Endothelial cell of umbilical vein (primary cell): ENCODE measurements at regions of chr2 and their contacts with region 1.

Region 1: GRCh38 chr2:231191896-231192872 is 6.2 kb upstream of the ARMC9 start:
- DNase-seq: peak; percentile 77
- H3K4me3 ChIP-seq: no peak overlapping the region
- H3K27ac ChIP-seq: peak overlapping the region; percentile 47
- H3K4me1 ChIP-seq: peaks cover 24% of the 10 kb centered on the region
- H3K27me3 ChIP-seq: no peaks in the 10 kb centered on the region
- CTCF ChIP-seq: peak; percentile 79 to 88
- POLR2A ChIP-seq: no peak

Region 2: DNA sequence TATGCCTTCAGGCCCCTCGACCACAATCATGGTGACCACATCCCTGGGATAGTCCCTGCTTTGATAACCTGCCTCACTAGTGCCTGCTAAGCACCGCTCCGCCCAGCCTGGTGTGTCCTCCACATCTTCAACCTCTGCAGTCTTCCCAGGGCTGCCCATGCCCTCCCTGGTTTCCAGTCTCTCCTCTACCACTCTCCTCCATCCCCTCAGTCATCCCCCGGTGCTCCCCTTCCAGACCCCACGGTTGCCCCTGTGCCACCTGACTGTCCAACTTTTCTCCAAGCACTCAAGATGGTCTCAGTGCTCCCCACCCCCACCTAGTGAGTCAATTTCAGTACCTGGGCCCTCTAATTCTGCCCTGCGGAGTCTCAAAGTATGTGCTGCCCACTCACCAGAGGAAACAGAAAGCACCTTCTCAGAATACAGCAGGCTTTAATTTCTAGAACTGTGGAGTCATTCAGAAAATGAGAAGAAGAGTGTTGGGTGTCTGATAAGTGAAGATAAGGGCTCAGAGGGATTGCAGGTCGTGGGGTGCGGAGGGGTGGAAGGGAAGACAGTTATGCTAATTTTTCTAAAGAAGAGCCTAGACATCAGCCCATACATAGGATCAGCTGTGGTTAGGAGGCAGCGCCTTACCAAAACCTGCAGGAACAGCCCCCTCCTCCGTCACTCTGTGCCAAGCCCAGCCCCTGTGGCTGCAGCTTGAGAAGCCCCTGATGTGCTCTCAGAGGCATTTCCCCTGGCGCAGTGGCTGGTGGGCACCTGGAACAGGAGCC is 533.1 kb before region 1 on chr2:
- CTCF ChIA-PET with region 1: no interaction called
- POLR2A ChIA-PET with region 1: no interaction called
- dilution Hi-C with region 1: no loop called
- intact Hi-C with region 1: no loop called
- DNase-seq: no peak
- H3K4me3 ChIP-seq: no peak overlapping the region
- H3K27ac ChIP-seq: no peak overlapping the region
- H3K4me1 ChIP-seq: peaks cover 4% of the 10 kb centered on the region
- H3K27me3 ChIP-seq: no peaks in the 10 kb centered on the region
- CTCF ChIP-seq: no peak
- POLR2A ChIP-seq: no peak

Region 3: GRCh38 chr2:231124838-231125568 is 67.2 kb before region 1 on chr2 and contains the start of gene HTR2B:
- CTCF ChIA-PET with region 1: interaction called, 16 read pairs
- POLR2A ChIA-PET with region 1: interaction called, 5 read pairs
- dilution Hi-C with region 1: no loop called
- intact Hi-C with region 1: no loop called
- DNase-seq: peak; percentile 69
- H3K4me3 ChIP-seq: peak within 1 kb of the TSS in 1 of 3 experiments; percentile 65
- H3K27ac ChIP-seq: peak within 1 kb of the TSS; percentile 23
- H3K4me1 ChIP-seq: peaks cover 38% of the 10 kb centered on the region
- H3K27me3 ChIP-seq: no peaks in the 10 kb centered on the region
- CTCF ChIP-seq: no peak
- POLR2A ChIP-seq: no peak
- total RNA-seq, gene HTR2B: 0.55 and 0.93 TPM in 2 replicates

Region 4: DNA sequence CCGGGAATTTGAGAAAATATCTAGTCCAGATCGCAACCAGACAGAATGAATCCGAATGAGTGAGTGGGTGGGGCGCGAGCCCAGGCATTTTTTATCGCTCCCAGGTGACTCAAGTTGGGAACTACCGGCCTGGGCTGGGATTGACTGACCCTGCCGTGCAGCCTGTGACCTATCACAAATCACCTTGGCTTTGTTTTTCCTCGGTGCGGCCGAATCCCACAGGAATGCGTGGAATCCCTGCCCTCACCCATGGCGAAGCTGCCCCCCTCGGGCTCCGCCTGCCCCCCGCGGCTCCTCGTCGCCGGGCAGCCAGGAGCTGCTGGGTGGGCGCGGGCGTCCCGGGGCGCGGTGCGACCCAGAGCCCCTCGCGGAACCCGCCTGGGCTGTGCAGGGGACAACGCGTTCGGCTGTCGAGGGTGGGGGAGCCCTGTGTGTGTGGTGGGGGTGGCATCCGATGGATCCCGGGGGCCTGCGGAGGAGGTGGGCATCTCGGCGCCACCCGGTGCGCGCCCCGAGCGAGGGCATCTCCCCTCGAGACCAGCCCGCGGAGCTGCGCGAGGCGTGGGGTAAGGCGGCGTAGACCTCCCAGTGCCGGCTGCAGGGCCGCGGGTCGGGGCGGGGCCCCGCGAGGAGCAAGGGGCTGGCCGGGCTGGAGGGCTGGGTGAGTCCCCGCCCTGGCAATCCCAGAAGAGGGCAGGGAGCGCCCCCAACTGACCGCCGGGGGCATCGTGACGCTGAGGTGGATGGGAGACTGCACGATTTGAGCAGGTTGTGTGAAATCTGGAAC is 219.8 kb after region 1 on chr2:
- CTCF ChIA-PET with region 1: interaction called, 10 read pairs
- POLR2A ChIA-PET with region 1: no interaction called
- dilution Hi-C with region 1: no loop called
- intact Hi-C with region 1: no loop called
- DNase-seq: peak; percentile 81
- H3K4me3 ChIP-seq: peak overlapping the region; percentile 18 to 73 (median 21)
- H3K27ac ChIP-seq: no peak overlapping the region
- H3K4me1 ChIP-seq: peaks cover 3% of the 10 kb centered on the region
- H3K27me3 ChIP-seq: no peaks in the 10 kb centered on the region
- CTCF ChIP-seq: peak; percentile 91 to 97
- POLR2A ChIP-seq: no peak